ENCODE measurements at regions of chr1 and their contacts with region 1.

Region 1: DNA sequence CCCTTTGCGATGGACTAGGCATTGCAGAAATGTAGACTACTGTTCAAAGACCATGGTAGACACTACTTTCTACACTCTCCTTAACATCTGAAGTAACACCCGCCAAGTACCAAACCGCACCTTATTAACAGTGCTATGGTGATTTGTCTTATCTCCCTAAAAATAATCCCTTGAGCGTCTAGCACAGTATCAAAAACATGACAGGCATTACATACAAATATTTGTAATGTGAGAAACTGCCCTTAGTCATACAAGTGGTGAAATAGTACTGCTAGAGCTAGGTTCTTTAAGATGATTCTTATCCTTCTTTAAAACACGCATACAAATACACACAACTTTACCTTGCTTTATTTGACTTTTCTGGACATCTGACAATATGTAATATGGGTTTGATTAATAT is 27.2 kb downstream of the PUM1 start:
- DNase-seq: no peak
- ATAC-seq: no peak
- H3K4me3 ChIP-seq: no peak overlapping the region
- H3K27ac ChIP-seq: 0 out of 3 replicates have a peak overlapping the region, but pooled peaks have one; percentile 23
- H3K4me1 ChIP-seq: peaks cover 3 to 4% of the 10 kb centered on the region in 2 experiments; a peak in 4 of 5 replicates
- H3K27me3 ChIP-seq: no peaks in the 10 kb centered on the region
- CTCF ChIP-seq: no peak
- EP300 ChIP-seq: no peak
- POLR2A ChIP-seq: no peak
- RAD21 ChIP-seq: no peak

Region 2: GRCh38 chr1:31027693-31028526 is 10.4 kb before region 1 on chr1:
- CTCF ChIA-PET with region 1: no interaction called
- POLR2A ChIA-PET with region 1: interaction called, 15 read pairs
- in situ Hi-C with region 1: no loop called
- intact Hi-C with region 1: no loop called
- DNase-seq: peak in 2 of 4 experiments; percentile 60 to 73
- ATAC-seq: peak; percentile 62
- H3K4me3 ChIP-seq: no peak overlapping the region
- H3K27ac ChIP-seq: peak overlapping the region; percentile 51; the same call in 2 of the 3 replicates
- H3K4me1 ChIP-seq: peaks cover 8 to 33% of the 10 kb centered on the region in 2 experiments; a peak in 4 of 5 replicates
- H3K27me3 ChIP-seq: no peaks in the 10 kb centered on the region
- CTCF ChIP-seq: no peak
- EP300 ChIP-seq: no peak
- POLR2A ChIP-seq: no peak
- RAD21 ChIP-seq: no peak

Region 3: DNA sequence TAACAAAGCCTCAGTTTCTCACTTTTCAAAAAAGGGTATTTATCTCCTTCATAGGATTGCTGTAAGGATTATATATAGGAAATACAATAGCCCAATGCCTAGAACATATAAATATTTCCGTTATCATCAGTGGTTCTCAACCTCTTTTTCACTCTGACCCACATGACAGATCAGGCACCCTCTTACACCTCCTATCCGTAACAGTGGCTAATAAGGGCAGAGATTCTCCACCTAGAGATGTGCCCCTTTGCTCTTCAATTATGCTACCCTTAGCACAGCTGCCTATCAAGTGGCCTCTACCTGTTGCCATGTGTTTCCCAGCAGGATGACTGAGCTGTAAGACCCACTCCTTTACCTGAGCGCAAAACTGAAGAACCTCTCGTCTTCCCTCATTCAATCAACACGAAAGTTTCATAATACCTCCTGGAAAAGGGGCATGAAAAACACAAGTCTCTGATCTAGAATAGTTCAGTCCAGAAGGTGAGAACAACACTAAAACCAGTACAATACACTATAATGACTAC is 16.7 kb after region 1 on chr1:
- CTCF ChIA-PET with region 1: interaction called, 3 read pairs
- POLR2A ChIA-PET with region 1: interaction called, 31 read pairs
- in situ Hi-C with region 1: no loop called
- intact Hi-C with region 1: no loop called
- DNase-seq: no peak
- ATAC-seq: no peak
- H3K4me3 ChIP-seq: no peak overlapping the region
- H3K27ac ChIP-seq: no peak overlapping the region
- H3K4me1 ChIP-seq: no peaks in the 10 kb centered on the region; a peak in 2 of 5 replicates
- H3K27me3 ChIP-seq: no peaks in the 10 kb centered on the region
- CTCF ChIP-seq: no peak
- EP300 ChIP-seq: no peak
- POLR2A ChIP-seq: no peak
- RAD21 ChIP-seq: no peak

Region 4: GRCh38 chr1:31065310-31066217 is 27.2 kb after region 1 on chr1 and contains the start of gene PUM1:
- CTCF ChIA-PET with region 1: no interaction called
- POLR2A ChIA-PET with region 1: interaction called, 20 read pairs
- in situ Hi-C with region 1: no loop called
- intact Hi-C with region 1: no loop called
- DNase-seq: peak; percentile 93 to 97 (median 96)
- ATAC-seq: peak; percentile 91
- H3K4me3 ChIP-seq: peak within 1 kb of the TSS; percentile 89
- H3K27ac ChIP-seq: peak within 1 kb of the TSS; percentile 99
- H3K4me1 ChIP-seq: peaks cover 15 to 29% of the 10 kb centered on the region in 2 experiments; a peak in 4 of 5 replicates
- H3K27me3 ChIP-seq: no peaks in the 10 kb centered on the region
- CTCF ChIP-seq: no peak
- EP300 ChIP-seq: peak; percentile 36
- POLR2A ChIP-seq: peak; percentile 98
- RAD21 ChIP-seq: 0 out of 4 replicates have a peak, but pooled peaks of 1 of the 2 experiments have one; percentile 8
- polyA plus RNA-seq, gene PUM1: 37.7 to 43.8 TPM